ENCODE measurements at regions of chr5 and their contacts with region 1.

Region 1: GRCh38 chr5:14331386-14331781 is 188.2 kb downstream of the TRIO start:
- DNase-seq: no peak
- ATAC-seq: no peak
- H3K4me3 ChIP-seq: no peak overlapping the region
- H3K27ac ChIP-seq: no peak overlapping the region
- H3K4me1 ChIP-seq: peaks cover 3 to 4% of the 10 kb centered on the region in 2 donors
- H3K27me3 ChIP-seq: no peaks in the 10 kb centered on the region

Region 2: DNA sequence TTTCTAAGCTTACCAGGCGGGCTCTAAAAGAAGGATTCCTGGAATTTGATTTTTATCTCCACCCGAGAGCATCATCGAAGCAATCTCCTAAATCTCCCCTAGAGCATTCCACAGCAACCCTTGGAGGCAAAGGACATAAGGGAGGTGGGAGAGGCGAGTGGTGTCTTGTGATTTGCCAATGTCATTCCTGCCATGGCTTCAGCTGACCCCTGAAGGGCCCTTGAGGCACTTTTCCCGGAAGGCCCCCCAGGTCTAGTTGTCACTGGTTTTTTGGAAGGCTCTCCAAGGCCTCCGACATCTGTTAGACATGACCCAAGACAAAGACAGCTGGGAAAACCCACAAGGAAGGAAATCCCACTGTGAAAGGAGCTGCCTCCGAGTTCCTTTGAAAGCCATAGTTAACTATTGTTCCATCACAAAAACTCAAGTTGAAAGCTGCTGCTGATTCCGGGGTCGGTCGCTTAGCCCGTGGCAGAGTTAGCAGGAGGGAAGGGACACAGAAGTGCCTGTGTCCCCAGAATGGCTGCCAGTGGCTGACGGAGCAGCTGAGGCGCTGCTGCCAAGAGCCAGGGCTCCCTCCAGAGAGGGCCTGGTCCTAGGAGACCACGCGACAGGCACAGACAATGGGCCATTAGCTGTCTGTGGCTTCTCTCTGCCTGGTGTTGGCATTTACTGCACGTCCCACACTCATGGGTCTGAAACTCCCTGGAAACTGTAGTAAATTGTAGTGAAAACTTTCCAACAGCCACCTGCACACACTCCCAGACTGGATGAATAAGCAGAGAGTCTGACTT is 212.7 kb before region 1 on chr5:
- intact Hi-C with region 1: loop called in 1 of 2 experiments (anchors 10 kb)
- DNase-seq: peak in 1 of 2 donors; percentile 73
- ATAC-seq: no peak
- H3K4me3 ChIP-seq: no peak overlapping the region
- H3K27ac ChIP-seq: no peak overlapping the region
- H3K4me1 ChIP-seq: no peaks in the 10 kb centered on the region
- H3K27me3 ChIP-seq: no peaks in the 10 kb centered on the region

Region 3: DNA sequence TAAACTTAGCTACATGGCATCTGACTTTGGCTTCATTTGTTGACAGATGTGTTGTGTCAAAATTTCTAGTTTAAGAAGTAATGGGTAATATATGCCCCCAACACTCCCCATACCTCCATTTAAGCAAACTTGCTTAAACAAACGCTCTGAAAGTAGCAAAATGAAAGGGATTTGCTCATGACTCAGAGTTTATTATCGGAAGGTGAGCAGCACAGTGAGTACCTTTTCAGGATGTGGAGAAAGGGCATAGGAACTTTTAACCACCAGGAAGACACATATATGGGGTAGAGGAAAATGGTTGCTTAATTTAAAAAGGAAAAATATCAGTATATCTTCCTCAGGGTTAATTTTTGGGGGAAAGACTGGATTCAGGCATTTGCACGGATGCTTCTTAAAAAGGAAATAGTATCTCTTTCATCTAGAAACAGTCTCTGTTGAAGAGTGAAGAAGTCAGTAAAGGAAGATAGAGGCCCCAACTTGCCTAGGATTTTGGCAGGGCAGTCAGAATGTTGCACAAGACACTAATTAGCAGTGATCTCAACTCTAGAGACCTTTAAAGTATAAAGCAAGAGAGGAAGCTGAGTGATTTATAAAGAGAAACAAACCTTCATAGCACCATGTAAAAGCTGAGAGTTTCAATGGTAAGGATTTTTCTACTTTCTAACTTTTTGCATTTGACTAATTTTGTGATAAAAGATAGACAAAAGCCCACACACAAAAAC is 33.1 kb before region 1 on chr5:
- intact Hi-C with region 1: loop called in 1 of 2 experiments (anchors 5 kb)
- DNase-seq: no peak
- ATAC-seq: no peak
- H3K4me3 ChIP-seq: no peak overlapping the region
- H3K27ac ChIP-seq: no peak overlapping the region
- H3K4me1 ChIP-seq: no peaks in the 10 kb centered on the region
- H3K27me3 ChIP-seq: no peaks in the 10 kb centered on the region

Region 4: GRCh38 chr5:14405267-14405666 is 73.9 kb after region 1 on chr5:
- intact Hi-C with region 1: no loop called
- DNase-seq: no peak
- ATAC-seq: no peak
- H3K4me3 ChIP-seq: no peak overlapping the region
- H3K27ac ChIP-seq: no peak overlapping the region
- H3K4me1 ChIP-seq: no peaks in the 10 kb centered on the region
- H3K27me3 ChIP-seq: no peaks in the 10 kb centered on the region

Measured in aorta (tissue), 5 donors.